ENCODE measurements at regions of chr15 and their contacts with region 1.

Region 1: DNA sequence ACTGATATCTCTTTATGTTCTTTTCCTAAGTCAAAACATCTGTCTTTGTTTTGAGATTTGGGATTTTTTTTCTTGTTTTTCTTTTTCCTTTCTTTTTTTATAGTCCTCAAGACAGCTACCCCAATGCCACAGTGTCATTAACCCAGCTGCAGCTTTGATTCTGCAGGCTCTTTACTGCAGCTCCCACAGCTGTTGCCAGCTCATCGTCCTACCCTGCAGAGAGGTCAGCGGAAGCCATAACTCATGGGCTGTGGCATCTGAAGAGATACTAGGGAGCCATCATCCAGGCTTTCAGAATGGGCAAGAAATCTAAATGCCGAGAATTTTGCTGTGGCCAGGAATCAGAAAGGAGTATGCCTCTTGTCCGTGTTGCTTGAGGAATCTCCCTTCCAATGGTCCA is 44.3 kb upstream of the SLC24A5 start:
- DNase-seq: no peak
- H3K4me3 ChIP-seq: no peak overlapping the region
- H3K27ac ChIP-seq: no peak overlapping the region
- H3K4me1 ChIP-seq: no peaks in the 10 kb centered on the region
- H3K27me3 ChIP-seq: no peaks in the 10 kb centered on the region
- CTCF ChIP-seq: no peak
- POLR2A ChIP-seq: no peak

Region 2: GRCh38 chr15:46251903-46252302 is 1824.6 kb before region 1 on chr15:
- intact Hi-C with region 1: no loop called
- DNase-seq: no peak
- H3K4me3 ChIP-seq: no peak overlapping the region
- H3K27ac ChIP-seq: no peak overlapping the region
- H3K4me1 ChIP-seq: no peaks in the 10 kb centered on the region
- H3K27me3 ChIP-seq: no peaks in the 10 kb centered on the region
- CTCF ChIP-seq: no peak
- POLR2A ChIP-seq: no peak

Region 3: GRCh38 chr15:49199666-49200065 is 1123.2 kb after region 1 on chr15:
- intact Hi-C with region 1: loop called (anchors 10 kb)
- DNase-seq: no peak
- H3K4me3 ChIP-seq: no peak overlapping the region
- H3K27ac ChIP-seq: no peak overlapping the region
- H3K4me1 ChIP-seq: no peaks in the 10 kb centered on the region
- H3K27me3 ChIP-seq: no peaks in the 10 kb centered on the region
- CTCF ChIP-seq: no peak
- POLR2A ChIP-seq: no peak

Measured in breast epithelium (tissue), 4 donors.